A549 (cell line): ENCODE measurements at regions of chr15 and their contacts with region 1.

Region 1: DNA sequence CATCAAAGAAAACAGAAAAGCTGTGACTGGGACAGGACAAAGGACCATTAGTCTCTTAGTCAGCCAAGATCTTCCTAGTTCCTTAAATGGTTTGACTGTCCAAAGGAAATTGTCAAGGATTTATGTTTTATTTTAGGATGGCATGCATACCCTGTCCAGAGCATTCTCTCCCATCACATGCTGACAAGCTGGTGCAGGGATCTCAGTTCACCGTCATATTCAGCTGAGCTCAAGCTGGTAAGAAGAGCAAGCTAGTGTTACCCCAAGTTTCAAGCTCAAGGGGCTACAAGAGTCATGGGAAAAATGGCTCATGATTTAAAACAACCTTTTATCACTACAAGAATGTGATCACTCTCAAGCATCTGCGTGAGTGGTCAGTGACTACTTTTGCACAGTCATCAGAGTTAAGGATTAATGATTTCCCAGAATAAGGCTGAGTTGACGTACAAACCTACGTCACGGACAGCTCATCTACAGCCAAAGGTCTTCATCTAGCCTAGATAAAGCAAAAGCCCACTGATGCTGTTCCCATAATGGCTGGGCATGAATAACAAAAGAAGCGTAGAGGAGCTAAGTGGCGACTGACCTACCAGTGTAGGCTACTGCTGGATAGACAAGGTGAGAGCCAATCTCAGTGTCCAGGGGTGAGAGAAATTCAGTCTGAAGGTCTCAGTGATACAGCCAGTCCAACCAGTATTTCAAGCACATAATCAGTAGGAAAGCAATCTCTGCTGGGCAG is 157.5 kb downstream of the GABRB3 start:
- DNase-seq: peak; percentile 83 to 98
- ATAC-seq: peak; percentile 94 to 97
- H3K4me3 ChIP-seq: 0 out of 3 replicates have a peak overlapping the region, but pooled peaks have one; percentile 7
- H3K27ac ChIP-seq: peak overlapping the region; percentile 87 to 92
- H3K4me1 ChIP-seq: peaks cover 41% of the 10 kb centered on the region
- CTCF ChIP-seq: no peak
- EP300 ChIP-seq: peak; percentile 93 to 96
- POLR2A ChIP-seq: no peak
- RAD21 ChIP-seq: peak; percentile 28 to 59; a peak in 4 of 5 replicates

Region 2: DNA sequence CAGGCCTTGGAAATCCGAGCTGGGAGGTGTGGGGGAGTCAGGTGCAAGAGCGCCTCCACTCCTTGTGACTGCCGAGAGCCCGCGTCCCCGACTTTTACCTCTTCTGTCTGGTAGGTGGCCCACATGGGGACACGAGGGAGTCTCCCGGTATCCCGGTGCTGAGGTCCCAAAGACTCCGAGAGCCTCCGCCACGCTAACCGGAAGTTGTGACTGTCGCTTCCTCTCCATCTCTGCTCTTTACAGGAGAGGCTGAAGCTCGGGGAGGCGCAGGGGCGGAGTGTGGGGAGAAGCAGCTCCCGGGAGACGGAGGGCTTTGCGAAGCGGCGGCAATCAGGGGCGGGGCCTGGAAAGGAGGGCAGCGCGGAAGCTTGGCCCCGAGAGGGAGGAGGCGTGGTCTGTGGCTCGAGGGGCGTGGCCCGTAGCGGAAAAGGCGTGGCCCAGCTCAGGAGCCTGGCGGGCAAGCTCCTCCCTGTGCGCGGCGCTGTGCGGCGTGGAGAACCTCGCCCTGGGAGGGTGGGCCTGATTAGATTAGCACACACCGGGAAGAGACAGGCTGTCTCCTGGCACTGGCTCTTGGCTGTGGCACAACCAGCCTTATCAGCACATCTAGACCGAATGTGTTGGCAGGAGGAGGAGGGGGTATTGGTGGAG is 13.6 kb after region 1 on chr15:
- CTCF ChIA-PET with region 1: interaction called, 27 read pairs
- POLR2A ChIA-PET with region 1: interaction called, 58 read pairs
- DNase-seq: peak; percentile 62 to 97
- ATAC-seq: peak; percentile 84 to 89
- H3K4me3 ChIP-seq: peak overlapping the region; percentile 63
- H3K27ac ChIP-seq: peak overlapping the region; percentile 97 to 98
- H3K4me1 ChIP-seq: peaks cover 77% of the 10 kb centered on the region
- CTCF ChIP-seq: peak; percentile 6; the same call in 1 of the 3 replicates
- EP300 ChIP-seq: peak in 1 of 2 experiments; percentile 19; a peak in 1 of 5 replicates
- POLR2A ChIP-seq: peak; percentile 55
- RAD21 ChIP-seq: peak in 1 of 2 experiments; percentile 30; a peak in 2 of 5 replicates

Region 3: DNA sequence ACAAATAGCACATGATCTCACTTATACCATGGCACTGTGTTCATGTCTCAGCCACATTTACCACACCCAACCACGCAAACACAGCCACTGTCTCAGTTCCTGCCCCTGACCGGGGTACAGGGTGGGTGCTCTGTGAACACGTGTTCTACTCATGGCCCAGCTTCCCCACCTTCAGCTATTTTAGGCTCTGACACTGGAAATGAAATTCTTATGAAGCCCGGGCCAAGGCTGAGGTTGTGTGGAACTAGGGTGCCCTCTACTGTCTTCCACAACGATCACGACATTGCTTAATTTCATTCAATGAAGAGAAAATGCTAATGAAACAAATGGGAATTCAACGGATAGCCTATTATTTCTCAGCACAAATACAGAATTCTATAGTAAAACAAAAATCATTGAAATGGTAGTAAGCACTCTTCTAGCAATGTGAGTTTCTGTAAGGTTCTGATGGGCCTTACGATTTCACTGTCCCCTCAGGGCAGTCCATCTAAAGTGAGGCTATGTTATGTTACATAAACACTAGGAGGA is 249.4 kb after region 1 on chr15:
- CTCF ChIA-PET with region 1: interaction called, 13 read pairs
- POLR2A ChIA-PET with region 1: no interaction called
- DNase-seq: peak; percentile 74 to 85
- ATAC-seq: peak; percentile 33 to 66; a peak in 4 of 6 replicates
- H3K4me3 ChIP-seq: no peak overlapping the region
- H3K27ac ChIP-seq: peak overlapping the region; percentile 75 to 78
- H3K4me1 ChIP-seq: peaks cover 18% of the 10 kb centered on the region
- CTCF ChIP-seq: peak; percentile 94
- EP300 ChIP-seq: no peak
- POLR2A ChIP-seq: no peak
- RAD21 ChIP-seq: peak; percentile 98